GM12878 (cell line): ENCODE measurements at regions of chr11 and their contacts with region 1.

Region 1: GRCh38 chr11:111870886-111871692 is at the start of gene ALG9:
- DNase-seq: peak; percentile 56
- ATAC-seq: peak; percentile 96
- H3K4me3 ChIP-seq: peak within 1 kb of the TSS; percentile 79
- H3K27ac ChIP-seq: peak within 1 kb of the TSS; percentile 72
- H3K4me1 ChIP-seq: peaks cover 4% of the 10 kb centered on the region; the same call in 1 of the 2 replicates
- H3K27me3 ChIP-seq: no peaks in the 10 kb centered on the region
- CTCF ChIP-seq: peak; percentile 3 to 32 (median 13); a peak in 3 of 6 replicates
- EP300 ChIP-seq: no peak
- POLR2A ChIP-seq: peak; percentile 81
- RAD21 ChIP-seq: no peak
- polyA plus RNA-seq, gene ALG9: 10.8 to 22.1 TPM

Region 2: DNA sequence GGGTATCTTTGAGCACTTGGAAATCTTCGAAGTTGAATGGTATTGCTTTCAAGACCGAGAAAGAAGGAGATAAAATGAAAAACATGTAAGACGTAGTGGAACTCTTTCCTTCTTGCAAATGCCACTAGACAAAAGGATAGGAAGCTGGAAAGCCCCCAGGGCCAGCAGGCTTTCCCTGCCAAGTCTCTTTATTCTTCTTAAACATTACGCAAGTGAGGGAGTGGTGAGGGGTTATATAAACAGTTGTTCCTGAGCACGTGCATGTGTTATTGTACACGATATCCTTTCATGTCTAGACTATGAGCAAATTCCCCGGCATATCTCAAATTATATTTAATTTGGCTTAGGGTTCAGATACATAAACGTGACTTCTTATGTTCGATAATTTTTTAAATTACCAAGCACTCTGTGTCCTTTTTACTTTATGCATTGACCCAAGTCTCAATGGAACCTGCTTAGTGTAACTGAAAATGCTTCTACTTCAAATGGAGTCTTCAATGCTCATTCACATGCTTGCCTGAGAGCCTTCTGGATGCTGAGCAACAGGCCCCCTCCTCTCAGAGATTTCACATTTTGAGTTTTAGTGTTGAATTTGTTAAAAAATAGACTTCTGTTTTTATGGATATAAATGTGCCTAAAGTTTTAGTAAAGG is 163.9 kb before region 1 on chr11:
- CTCF ChIA-PET with region 1: no interaction called
- POLR2A ChIA-PET with region 1: no interaction called
- RAD21 ChIA-PET with region 1: no interaction called
- SMC1A ChIA-PET with region 1: no interaction called
- in situ Hi-C with region 1: no loop called
- intact Hi-C with region 1: no loop called
- DNase-seq: no peak
- ATAC-seq: no peak
- H3K4me3 ChIP-seq: no peak overlapping the region
- H3K27ac ChIP-seq: no peak overlapping the region
- H3K4me1 ChIP-seq: no peaks in the 10 kb centered on the region
- H3K27me3 ChIP-seq: no peaks in the 10 kb centered on the region
- CTCF ChIP-seq: no peak
- EP300 ChIP-seq: no peak
- POLR2A ChIP-seq: no peak
- RAD21 ChIP-seq: no peak

Region 3: DNA sequence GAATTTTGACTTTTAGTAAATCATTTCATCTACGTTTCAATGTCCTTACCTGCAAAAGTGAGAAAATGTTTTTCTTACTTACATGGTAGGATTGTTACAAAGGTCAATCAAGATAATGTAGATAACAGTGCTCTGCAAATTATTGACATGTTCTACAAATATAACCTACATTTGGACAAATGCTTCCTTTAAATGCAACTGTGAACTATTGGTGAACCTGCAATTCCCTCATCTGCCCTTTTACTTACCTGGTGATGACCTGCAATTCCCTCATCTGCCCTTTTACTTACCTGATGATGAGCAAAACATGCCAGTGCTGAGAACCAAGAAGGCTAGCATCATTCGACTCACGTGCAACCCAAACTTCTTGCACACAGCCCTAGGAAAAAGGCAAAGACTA is 10.8 kb before region 1 on chr11:
- CTCF ChIA-PET with region 1: interaction called, 9 read pairs
- POLR2A ChIA-PET with region 1: interaction called, 3 read pairs
- RAD21 ChIA-PET with region 1: no interaction called
- SMC1A ChIA-PET with region 1: interaction called, 14 read pairs
- in situ Hi-C with region 1: no loop called
- intact Hi-C with region 1: no loop called
- DNase-seq: no peak
- ATAC-seq: no peak
- H3K4me3 ChIP-seq: no peak overlapping the region
- H3K27ac ChIP-seq: no peak overlapping the region
- H3K4me1 ChIP-seq: no peaks in the 10 kb centered on the region
- H3K27me3 ChIP-seq: no peaks in the 10 kb centered on the region
- CTCF ChIP-seq: no peak
- EP300 ChIP-seq: no peak
- POLR2A ChIP-seq: no peak
- RAD21 ChIP-seq: no peak

Region 4: DNA sequence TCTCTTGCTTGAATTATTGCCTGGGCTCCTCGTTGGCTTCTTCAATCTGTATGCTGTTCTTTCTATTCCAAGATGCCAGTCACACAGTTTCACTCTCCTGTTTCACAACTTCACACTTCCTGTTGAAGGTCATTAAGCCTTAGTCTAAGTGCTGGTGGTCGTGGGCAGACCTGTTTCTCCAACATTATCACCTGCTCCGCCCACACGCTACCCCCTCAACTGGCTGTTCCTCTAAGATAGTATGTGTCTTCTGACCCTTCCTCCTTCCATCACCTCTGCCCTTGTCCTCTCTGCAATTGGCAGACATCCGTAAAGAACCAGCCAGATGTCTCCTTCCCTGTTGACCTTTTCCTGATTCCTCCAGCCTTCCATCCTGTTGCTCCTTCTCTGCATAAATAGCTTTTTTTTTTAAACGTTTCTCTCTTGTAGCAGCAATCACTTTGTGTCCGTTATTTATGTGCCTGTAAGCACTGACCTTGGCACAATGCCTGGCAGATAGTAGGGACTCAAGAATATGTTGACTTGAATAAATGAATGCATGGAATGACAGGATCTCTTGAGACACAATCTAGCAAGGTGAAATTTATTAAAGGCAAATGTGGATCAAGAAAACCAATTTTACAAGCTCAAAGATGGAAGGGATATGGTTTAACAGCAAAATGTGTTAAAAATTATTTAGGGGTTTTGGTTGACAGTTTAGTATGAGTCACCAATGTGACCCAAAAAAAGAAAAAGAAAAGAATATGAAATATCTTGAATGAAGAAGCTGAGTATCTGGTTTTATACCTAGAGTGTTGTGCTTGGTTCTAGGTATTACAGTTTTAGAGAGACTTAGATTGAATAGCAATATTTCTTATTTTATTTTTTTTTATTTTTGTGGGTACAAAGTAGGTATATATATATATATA is 78.7 kb after region 1 on chr11:
- CTCF ChIA-PET with region 1: no interaction called
- POLR2A ChIA-PET with region 1: no interaction called
- RAD21 ChIA-PET with region 1: no interaction called
- SMC1A ChIA-PET with region 1: no interaction called
- in situ Hi-C with region 1: no loop called
- intact Hi-C with region 1: no loop called
- DNase-seq: no peak
- ATAC-seq: no peak
- H3K4me3 ChIP-seq: no peak overlapping the region
- H3K27ac ChIP-seq: no peak overlapping the region
- H3K4me1 ChIP-seq: peaks cover 10% of the 10 kb centered on the region
- H3K27me3 ChIP-seq: no peaks in the 10 kb centered on the region
- CTCF ChIP-seq: no peak
- EP300 ChIP-seq: no peak
- POLR2A ChIP-seq: no peak
- RAD21 ChIP-seq: no peak